CD8-positive, alpha-beta memory T cell (primary cell): ENCODE measurements at regions of chr6 and their contacts with region 1.

Region 1: DNA sequence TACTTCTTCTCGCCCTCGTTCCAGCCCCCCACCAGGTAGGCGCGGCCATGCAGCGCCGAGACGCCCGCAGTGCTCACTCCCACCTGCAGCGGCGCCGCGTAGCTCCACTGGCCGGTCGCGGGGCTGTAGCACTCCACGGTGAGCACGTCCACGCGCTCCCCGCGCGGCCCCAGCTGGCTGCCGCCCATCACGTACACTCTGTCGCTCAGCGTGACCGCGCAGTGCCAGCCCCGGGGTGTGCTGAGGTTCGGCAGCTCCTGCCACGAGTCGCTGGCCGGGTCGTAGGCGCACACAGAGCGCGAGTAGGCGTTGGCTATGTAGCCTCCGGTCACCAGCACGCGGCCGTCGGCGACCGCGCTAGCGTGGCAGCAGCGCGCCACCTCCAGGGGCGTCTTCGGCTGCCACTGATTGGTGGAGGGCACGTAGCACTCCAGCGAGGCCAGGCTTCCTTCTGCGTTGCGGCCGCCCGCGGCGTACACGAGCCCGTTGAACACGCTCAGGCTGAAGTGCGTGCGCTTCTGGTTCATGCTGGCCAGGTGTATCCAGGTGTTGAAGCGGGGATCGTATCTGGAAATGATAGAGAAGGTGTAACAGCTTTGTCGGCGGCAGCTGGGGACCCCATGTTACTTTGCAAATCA is 13.7 kb downstream of the KLHL31 start:
- DNase-seq: peak; percentile 65 to 87 (median 78)
- H3K4me3 ChIP-seq: peak overlapping the region; percentile 93
- H3K4me3 Mint-ChIP-seq: peak overlapping the region; percentile 90 to 96 (median 93)
- H3K27ac ChIP-seq: peak overlapping the region; percentile 71
- H3K27ac Mint-ChIP-seq: peak overlapping the region; percentile 78 to 95 (median 92)
- H3K4me1 ChIP-seq: peaks cover 24% of the 10 kb centered on the region
- H3K4me1 Mint-ChIP-seq: peaks cover 32 to 46% (median 43%) of the 10 kb centered on the region in 3 donors
- H3K27me3 ChIP-seq: no peaks in the 10 kb centered on the region
- H3K27me3 Mint-ChIP-seq: no peaks in the 10 kb centered on the region

Region 2: GRCh38 chr6:53492860-53493634 is 158.8 kb before region 1 on chr6:
- CTCF ChIA-PET with region 1: interaction called, 52 read pairs
- POLR2A ChIA-PET with region 1: interaction called, 3 read pairs
- DNase-seq: peak in 2 of 5 donors; percentile 41
- H3K4me3 ChIP-seq: no peak overlapping the region
- H3K4me3 Mint-ChIP-seq: peak overlapping the region in 1 of 7 donors; percentile 42
- H3K27ac ChIP-seq: no peak overlapping the region
- H3K27ac Mint-ChIP-seq: peak overlapping the region in 2 of 8 donors; percentile 51 to 75
- H3K4me1 ChIP-seq: no peaks in the 10 kb centered on the region
- H3K4me1 Mint-ChIP-seq: peaks cover 0 to 4% (median 0%) of the 10 kb centered on the region in 3 donors
- H3K27me3 ChIP-seq: no peaks in the 10 kb centered on the region
- H3K27me3 Mint-ChIP-seq: peaks cover 8 to 16% of the 10 kb centered on the region in 2 donors

Region 3: DNA sequence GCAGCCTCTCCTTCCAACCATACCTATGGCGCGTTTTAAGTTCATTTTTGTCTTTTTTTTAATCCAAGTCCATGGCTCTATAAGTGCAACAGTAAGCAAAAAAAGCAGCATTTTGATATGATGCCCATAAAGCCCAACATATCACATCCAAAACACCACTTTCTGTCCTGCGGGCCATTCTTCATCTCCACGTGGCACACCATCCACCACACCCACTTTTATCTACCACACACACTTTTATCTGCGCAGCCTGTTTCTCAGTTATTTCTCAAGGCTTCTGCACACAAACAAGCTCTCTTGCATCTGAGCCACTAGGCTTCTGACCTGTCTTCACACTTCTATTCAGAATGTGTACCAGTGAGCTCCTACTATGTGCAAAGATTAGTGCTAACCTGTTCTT is 112.3 kb before region 1 on chr6:
- CTCF ChIA-PET with region 1: interaction called, 32 read pairs
- POLR2A ChIA-PET with region 1: interaction called, 14 read pairs
- DNase-seq: no peak
- H3K4me3 ChIP-seq: no peak overlapping the region
- H3K4me3 Mint-ChIP-seq: peak overlapping the region in 1 of 7 donors; percentile 18
- H3K27ac ChIP-seq: no peak overlapping the region
- H3K27ac Mint-ChIP-seq: no peak overlapping the region
- H3K4me1 ChIP-seq: peaks cover 16% of the 10 kb centered on the region
- H3K4me1 Mint-ChIP-seq: peaks cover 52 to 83% (median 80%) of the 10 kb centered on the region in 3 donors
- H3K27me3 ChIP-seq: no peaks in the 10 kb centered on the region
- H3K27me3 Mint-ChIP-seq: no peaks in the 10 kb centered on the region

Region 4: GRCh38 chr6:53544470-53545308 is 107.2 kb before region 1 on chr6 and contains the start of gene GCLC:
- CTCF ChIA-PET with region 1: interaction called, 32 read pairs
- POLR2A ChIA-PET with region 1: interaction called, 14 read pairs
- DNase-seq: peak; percentile 80 to 91 (median 86)
- H3K4me3 ChIP-seq: peak within 1 kb of the TSS; percentile 52
- H3K4me3 Mint-ChIP-seq: peak within 1 kb of the TSS; percentile 90 to 98 (median 96)
- H3K27ac ChIP-seq: peak within 1 kb of the TSS; percentile 78
- H3K27ac Mint-ChIP-seq: peak within 1 kb of the TSS; percentile 78 to 97 (median 90)
- H3K4me1 ChIP-seq: peaks cover 31% of the 10 kb centered on the region
- H3K4me1 Mint-ChIP-seq: peaks cover 53 to 81% (median 78%) of the 10 kb centered on the region in 3 donors
- H3K27me3 ChIP-seq: no peaks in the 10 kb centered on the region
- H3K27me3 Mint-ChIP-seq: no peaks in the 10 kb centered on the region
- total RNA-seq, gene GCLC: 33.3 to 37.1 TPM